Motor neuron (in vitro differentiated cells): ENCODE measurements at regions of chr1 and their contacts with region 1.

Region 1: GRCh38 chr1:17119076-17119772 is at the start of gene PADI2:
- ATAC-seq: peak; percentile 87 to 99 (median 91)
- H3K4me3 ChIP-seq: peak within 1 kb of the TSS; percentile 27 to 48 (median 34)
- H3K27ac ChIP-seq: peak within 1 kb of the TSS in 1 of 2 donors; percentile 0
- H3K4me1 ChIP-seq: peaks cover 23 to 25% of the 10 kb centered on the region in 2 donors
- total RNA-seq, gene PADI2: 0.92 to 5.3 (median 2.0) TPM

Region 2: GRCh38 chr1:16420424-16421118 is 698.7 kb before region 1 on chr1:
- in situ Hi-C with region 1: no loop called
- ATAC-seq: peak in 5 of 8 experiments; percentile 26 to 67 (median 53)
- H3K4me3 ChIP-seq: no peak overlapping the region
- H3K27ac ChIP-seq: no peak overlapping the region
- H3K4me1 ChIP-seq: peaks cover 9 to 17% of the 10 kb centered on the region in 2 donors

Region 3: GRCh38 chr1:16960560-16961296 is 158.5 kb before region 1 on chr1:
- in situ Hi-C with region 1: no loop called
- ATAC-seq: peak; percentile 89 to 99 (median 90)
- H3K4me3 ChIP-seq: peak overlapping the region; percentile 14 to 28 (median 19)
- H3K27ac ChIP-seq: peak overlapping the region in 1 of 2 donors; percentile 19
- H3K4me1 ChIP-seq: no peaks in the 10 kb centered on the region

Region 4: DNA sequence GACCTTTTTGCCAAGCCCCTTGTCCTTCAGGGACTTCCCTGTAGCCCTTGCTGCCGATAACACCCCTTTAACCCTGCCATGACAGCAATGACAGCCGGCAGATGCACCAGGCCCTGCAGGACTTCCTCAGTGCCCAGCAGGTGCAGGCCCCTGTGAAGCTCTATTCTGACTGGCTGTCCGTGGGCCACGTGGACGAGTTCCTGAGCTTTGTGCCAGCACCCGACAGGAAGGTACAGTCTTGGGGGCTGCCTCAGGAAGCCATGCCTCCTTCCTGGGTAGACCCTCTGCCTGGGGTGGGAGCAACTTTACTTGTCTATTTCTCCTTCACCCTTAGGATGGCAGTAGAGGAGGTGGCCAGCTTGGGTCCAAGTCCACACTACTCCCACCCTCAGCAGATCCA is 236.7 kb after region 1 on chr1:
- in situ Hi-C with region 1: no loop called
- ATAC-seq: no peak
- H3K4me3 ChIP-seq: no peak overlapping the region
- H3K27ac ChIP-seq: no peak overlapping the region
- H3K4me1 ChIP-seq: peaks cover 0 to 4% of the 10 kb centered on the region in 2 donors

Region 5: DNA sequence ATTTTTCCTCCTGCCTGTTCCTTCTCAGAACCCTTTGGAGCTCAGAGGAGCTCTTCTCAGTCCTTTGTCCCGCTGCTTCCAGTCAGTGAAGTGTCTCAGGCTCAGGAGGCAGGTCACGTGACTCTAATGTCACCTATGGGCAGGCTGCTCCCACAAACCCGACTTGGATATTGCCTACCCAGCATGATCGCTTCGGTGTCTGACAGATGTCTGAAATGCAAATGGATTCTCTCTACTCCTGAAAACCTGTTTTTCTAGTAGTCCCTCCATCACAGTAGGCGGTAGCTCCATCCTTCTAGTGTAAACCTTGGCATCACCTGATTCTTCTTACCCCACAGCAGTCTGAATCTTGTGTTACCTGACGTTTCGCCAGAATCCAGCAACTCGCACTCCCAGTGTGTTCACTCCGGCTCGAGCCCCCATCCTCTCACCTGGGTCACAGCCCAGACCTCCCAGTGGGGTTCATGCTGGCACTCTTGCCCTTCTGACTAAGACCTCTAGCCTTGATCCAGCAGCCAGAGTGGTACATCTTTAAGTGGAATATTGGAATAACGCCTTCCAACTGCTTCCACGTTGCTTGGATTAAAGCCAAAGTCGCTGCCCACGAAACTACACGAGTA is 258.2 kb after region 1 on chr1:
- in situ Hi-C with region 1: loop called in 1 of 9 experiments (anchors 25 kb)
- ATAC-seq: no peak
- H3K4me3 ChIP-seq: no peak overlapping the region
- H3K27ac ChIP-seq: no peak overlapping the region
- H3K4me1 ChIP-seq: no peaks in the 10 kb centered on the region